AG04450 (cell line): ENCODE measurements at regions of chr13 and their contacts with region 1.

Region 1: DNA sequence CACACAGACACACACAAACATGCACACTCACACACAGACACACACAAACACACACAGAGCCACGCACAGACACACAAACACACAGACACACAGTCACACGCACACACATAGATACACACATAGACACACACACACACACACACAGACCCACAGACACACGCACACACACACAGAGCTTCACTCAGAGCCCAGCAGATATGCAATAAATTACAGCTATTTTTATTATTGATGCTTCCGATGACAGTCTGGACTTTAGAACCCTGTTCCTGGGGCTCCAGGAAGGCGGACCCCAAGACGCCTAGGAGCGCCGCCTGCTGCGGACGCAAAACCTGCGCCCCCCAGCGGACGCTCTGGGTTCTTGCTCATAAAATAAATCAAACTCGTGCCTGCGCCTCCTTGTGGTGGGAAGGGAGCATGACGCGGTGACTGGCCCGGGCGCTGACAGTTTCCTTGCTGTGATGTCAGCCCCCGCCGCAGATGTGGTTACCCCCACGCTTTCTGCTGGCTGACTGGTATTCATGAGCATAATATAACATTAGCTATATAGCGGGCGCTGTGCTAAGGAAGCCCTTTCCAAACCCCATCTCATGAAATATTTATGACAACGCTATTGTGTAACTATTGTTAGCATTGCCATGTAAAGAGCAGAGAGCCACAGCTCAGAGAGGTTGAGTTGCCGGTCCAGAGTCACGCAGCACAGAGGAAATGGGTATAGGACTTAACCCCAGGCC is 64.4 kb upstream of the TM9SF2 start:
- DNase-seq: peak; percentile 72
- H3K4me3 ChIP-seq: no peak overlapping the region
- H3K27ac ChIP-seq: no peak overlapping the region
- H3K27me3 ChIP-seq: peaks cover 18% of the 10 kb centered on the region
- CTCF ChIP-seq: peak; percentile 100

Region 2: GRCh38 chr13:99176309-99177276 is 260.3 kb before region 1 on chr13:
- CTCF ChIA-PET with region 1: interaction called, 123 read pairs
- POLR2A ChIA-PET with region 1: no interaction called
- DNase-seq: no peak
- H3K4me3 ChIP-seq: no peak overlapping the region
- H3K27ac ChIP-seq: no peak overlapping the region
- H3K27me3 ChIP-seq: peaks cover 15% of the 10 kb centered on the region
- CTCF ChIP-seq: peak; percentile 99

Region 3: GRCh38 chr13:99269627-99270241 is 167.1 kb before region 1 on chr13:
- CTCF ChIA-PET with region 1: interaction called, 767 read pairs
- POLR2A ChIA-PET with region 1: no interaction called
- DNase-seq: peak; percentile 36
- H3K4me3 ChIP-seq: no peak overlapping the region
- H3K27ac ChIP-seq: no peak overlapping the region
- H3K27me3 ChIP-seq: no peaks in the 10 kb centered on the region
- CTCF ChIP-seq: peak; percentile 84

Region 4: GRCh38 chr13:99331881-99332293 is 105.0 kb before region 1 on chr13:
- CTCF ChIA-PET with region 1: interaction called, 13 read pairs
- POLR2A ChIA-PET with region 1: no interaction called
- DNase-seq: no peak
- H3K4me3 ChIP-seq: no peak overlapping the region
- H3K27ac ChIP-seq: no peak overlapping the region
- H3K27me3 ChIP-seq: no peaks in the 10 kb centered on the region
- CTCF ChIP-seq: no peak

Region 5: GRCh38 chr13:99417201-99418102 is 19.4 kb before region 1 on chr13:
- CTCF ChIA-PET with region 1: interaction called, 55 read pairs
- POLR2A ChIA-PET with region 1: no interaction called
- DNase-seq: no peak
- H3K4me3 ChIP-seq: no peak overlapping the region
- H3K27ac ChIP-seq: no peak overlapping the region
- H3K27me3 ChIP-seq: peaks cover 30% of the 10 kb centered on the region
- CTCF ChIP-seq: no peak

Region 6: DNA sequence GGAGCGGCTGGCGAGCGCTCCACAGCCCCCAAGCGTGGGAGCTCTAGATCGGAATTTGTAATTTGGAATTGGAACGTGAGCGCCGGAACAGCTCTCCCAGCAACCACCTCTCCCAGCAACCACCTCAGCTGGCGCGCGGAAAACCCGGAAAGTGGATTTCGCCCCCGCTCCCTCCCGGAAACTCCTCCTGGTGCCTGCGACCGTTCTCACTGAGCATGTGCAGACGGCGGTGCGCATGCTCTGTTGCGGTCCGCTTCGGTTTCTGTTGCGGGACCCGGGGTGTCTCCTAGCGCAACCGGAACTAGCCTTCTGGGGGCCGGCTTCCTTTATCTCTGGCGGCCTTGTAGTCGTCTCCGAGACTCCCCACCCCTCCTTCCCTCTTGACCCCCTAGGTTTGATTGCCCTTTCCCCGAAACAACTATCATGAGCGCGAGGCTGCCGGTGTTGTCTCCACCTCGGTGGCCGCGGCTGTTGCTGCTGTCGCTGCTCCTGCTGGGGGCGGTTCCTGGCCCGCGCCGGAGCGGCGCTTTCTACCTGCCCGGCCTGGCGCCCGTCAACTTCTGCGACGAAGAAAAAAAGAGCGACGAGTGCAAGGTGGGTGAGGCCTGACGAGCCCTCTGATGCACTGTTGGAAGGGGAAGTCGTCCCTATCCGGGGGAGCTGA is 64.5 kb after region 1 on chr13 and contains the start of gene TM9SF2:
- CTCF ChIA-PET with region 1: interaction called, 77 read pairs
- POLR2A ChIA-PET with region 1: no interaction called
- DNase-seq: peak; percentile 95
- H3K4me3 ChIP-seq: peak within 1 kb of the TSS; percentile 94
- H3K27ac ChIP-seq: peak within 1 kb of the TSS; percentile 42
- H3K27me3 ChIP-seq: no peaks in the 10 kb centered on the region
- CTCF ChIP-seq: no peak
- polyA plus RNA-seq, gene TM9SF2: 86.2 and 125 TPM in 2 replicates

Region 7: GRCh38 chr13:99855526-99856420 is 418.9 kb after region 1 on chr13:
- CTCF ChIA-PET with region 1: no interaction called
- POLR2A ChIA-PET with region 1: no interaction called
- DNase-seq: no peak
- H3K4me3 ChIP-seq: no peak overlapping the region
- H3K27ac ChIP-seq: no peak overlapping the region
- H3K27me3 ChIP-seq: peaks cover 11% of the 10 kb centered on the region
- CTCF ChIP-seq: no peak

Region 8: GRCh38 chr13:100409132-100409531 is 972.3 kb after region 1 on chr13:
- CTCF ChIA-PET with region 1: no interaction called
- POLR2A ChIA-PET with region 1: no interaction called
- DNase-seq: no peak
- H3K4me3 ChIP-seq: no peak overlapping the region
- H3K27ac ChIP-seq: no peak overlapping the region
- H3K27me3 ChIP-seq: no peaks in the 10 kb centered on the region
- CTCF ChIP-seq: no peak